Activated naive CD4-positive, alpha-beta T cell treated with anti-CD3 and anti-CD28 coated beads for 36 hours (primary cell): ENCODE measurements at regions of chr3 and their contacts with region 1.

Region 1: DNA sequence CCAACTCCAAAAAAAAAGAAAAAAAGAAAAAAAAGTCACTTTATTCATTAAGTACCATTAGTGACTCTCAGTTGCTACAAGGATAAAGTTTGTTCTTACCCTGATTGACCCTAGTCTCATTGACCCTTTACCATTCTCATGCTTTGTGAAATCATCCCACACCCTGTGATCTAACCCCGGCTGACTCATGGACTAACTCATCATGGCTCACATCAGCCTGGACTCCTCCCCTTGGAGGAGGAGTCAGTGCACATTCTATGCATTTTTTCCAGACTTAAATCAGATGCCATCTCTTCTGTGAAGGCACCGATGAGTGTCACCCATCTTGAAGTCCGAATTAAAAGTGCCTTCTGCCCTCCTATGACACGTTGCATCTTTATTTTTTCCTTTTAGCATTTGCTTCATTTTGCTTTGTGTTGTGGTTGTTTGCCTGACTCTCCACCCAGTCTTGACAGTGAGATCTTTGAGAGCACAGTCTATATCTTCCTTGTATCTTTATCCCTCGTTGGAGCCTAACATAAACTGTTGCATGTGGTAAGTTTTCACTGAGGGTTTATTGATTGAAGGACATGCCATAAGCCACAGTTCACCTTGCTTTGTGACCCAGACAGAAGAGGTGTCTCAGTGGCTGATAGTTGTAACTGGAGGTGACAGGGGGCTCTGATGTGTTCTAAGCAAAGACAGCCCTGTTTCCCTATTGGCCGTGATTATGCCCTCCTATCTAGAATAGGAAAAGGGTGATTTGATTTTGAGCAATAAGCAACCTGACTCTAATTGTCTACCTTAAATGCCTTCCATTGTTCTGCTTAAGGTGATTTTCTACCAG is 72.1 kb downstream of the IL1RAP start:
- DNase-seq: peak; percentile 78
- H3K4me3 Mint-ChIP-seq: peak overlapping the region; percentile 50
- H3K27ac Mint-ChIP-seq: peak overlapping the region; percentile 88
- H3K4me1 Mint-ChIP-seq: peaks cover 37% of the 10 kb centered on the region
- H3K27me3 Mint-ChIP-seq: no peaks in the 10 kb centered on the region

Region 2: DNA sequence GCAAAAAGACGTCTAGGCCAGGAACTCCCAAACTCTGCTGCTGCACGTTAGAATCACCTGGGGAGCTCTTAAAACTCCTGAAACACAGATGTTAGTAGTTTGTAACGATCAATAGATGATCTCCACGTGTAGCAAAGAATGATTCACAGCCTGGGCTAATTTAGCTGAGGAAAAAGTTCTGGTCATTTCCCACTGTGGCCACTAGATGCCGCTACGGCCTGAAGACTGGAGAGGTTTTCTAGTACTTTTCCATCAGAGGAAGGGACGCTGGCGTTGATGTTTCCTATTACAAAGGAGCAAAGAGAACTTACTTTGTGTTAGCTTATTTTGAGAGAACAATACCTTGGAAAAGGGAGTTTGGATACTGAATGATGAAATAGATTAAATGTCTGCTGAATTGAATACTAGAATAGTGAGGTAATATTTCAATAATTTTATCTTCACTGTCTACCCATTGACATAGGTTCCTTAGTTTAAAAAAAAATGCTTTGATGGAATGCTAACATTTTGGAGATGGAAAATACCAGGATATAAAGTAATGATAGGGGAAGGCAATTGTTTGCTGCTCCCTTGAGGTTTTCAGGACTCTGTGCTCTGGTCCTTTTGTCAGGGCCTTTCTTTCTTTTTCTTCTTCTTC is 624.4 kb before region 1 on chr3:
- CTCF ChIA-PET with region 1: no interaction called
- intact Hi-C with region 1: loop called (anchors 10 kb)
- DNase-seq: peak; percentile 87
- H3K4me3 Mint-ChIP-seq: no peak overlapping the region
- H3K27ac Mint-ChIP-seq: no peak overlapping the region
- H3K4me1 Mint-ChIP-seq: peaks cover 5% of the 10 kb centered on the region
- H3K27me3 Mint-ChIP-seq: peaks cover 6% of the 10 kb centered on the region

Region 3: GRCh38 chr3:190306513-190307165 is 279.4 kb before region 1 on chr3:
- CTCF ChIA-PET with region 1: no interaction called
- intact Hi-C with region 1: loop called (anchors 5 kb)
- DNase-seq: peak; percentile 49
- H3K4me3 Mint-ChIP-seq: no peak overlapping the region
- H3K27ac Mint-ChIP-seq: peak overlapping the region; percentile 33
- H3K4me1 Mint-ChIP-seq: peaks cover 25% of the 10 kb centered on the region
- H3K27me3 Mint-ChIP-seq: no peaks in the 10 kb centered on the region

Region 4: GRCh38 chr3:190491533-190492054 is 94.4 kb before region 1 on chr3:
- CTCF ChIA-PET with region 1: no interaction called
- intact Hi-C with region 1: loop called (anchors 1 kb)
- DNase-seq: peak; percentile 30
- H3K4me3 Mint-ChIP-seq: no peak overlapping the region
- H3K27ac Mint-ChIP-seq: no peak overlapping the region
- H3K4me1 Mint-ChIP-seq: peaks cover 24% of the 10 kb centered on the region
- H3K27me3 Mint-ChIP-seq: peaks cover 46% of the 10 kb centered on the region

Region 5: DNA sequence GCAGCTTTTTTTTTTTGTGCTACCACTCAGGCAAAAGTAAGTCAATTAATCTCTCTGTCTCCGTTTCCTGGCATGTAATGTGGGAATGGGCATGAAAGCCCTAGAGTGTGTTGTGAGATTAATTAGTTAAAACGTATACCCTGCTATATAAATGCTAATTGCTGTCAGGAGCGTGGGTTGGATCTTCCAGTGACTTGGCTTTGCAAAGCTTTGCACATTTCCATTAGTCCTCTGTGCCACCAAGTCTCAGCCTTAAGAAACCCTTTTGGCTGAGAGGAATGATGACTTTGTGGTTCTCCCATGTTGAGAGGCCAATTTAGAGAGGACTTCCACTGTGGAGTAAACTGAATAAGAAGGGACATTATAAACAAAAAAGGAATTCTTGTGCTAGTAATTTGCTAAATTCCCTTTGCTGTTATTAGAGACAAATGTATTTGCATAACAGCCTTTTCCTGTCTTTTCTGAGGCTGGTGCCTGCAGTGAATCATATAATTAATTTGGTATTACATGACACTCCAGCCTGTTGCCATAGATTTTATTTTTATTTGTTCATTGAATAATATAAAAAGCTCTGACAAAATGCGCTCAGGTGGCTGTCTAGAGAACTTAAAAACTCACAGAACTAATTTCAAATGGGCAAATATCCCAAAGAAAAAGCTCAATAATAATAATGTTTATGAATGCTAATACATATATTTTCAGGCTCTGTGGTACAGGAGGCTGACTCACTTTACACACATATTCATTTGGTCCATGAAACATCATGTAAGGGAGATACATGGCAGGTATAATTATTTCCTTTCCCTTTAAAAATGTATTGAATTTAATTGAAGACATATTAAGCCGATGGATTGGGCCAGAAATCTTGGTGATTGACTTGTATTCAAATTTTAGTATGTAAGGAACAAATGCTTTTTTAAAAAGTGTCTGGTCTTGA is 10.6 kb after region 1 on chr3:
- CTCF ChIA-PET with region 1: no interaction called
- intact Hi-C with region 1: no loop called
- DNase-seq: no peak
- H3K4me3 Mint-ChIP-seq: no peak overlapping the region
- H3K27ac Mint-ChIP-seq: no peak overlapping the region
- H3K4me1 Mint-ChIP-seq: peaks cover 11% of the 10 kb centered on the region
- H3K27me3 Mint-ChIP-seq: no peaks in the 10 kb centered on the region